ENCODE measurements at regions of chr7 and their contacts with region 1.

Region 1: GRCh38 chr7:116929914-116930913 is 23.1 kb upstream of the ST7 start:
- DNase-seq: peak; percentile 60 to 69
- ATAC-seq: peak; percentile 83 to 88
- H3K4me3 ChIP-seq: no peak overlapping the region
- H3K27ac ChIP-seq: no peak overlapping the region
- H3K4me1 ChIP-seq: no peaks in the 10 kb centered on the region
- H3K27me3 ChIP-seq: no peaks in the 10 kb centered on the region
- CTCF ChIP-seq: peak; percentile 83 to 92 (median 86)
- POLR2A ChIP-seq: no peak

Region 2: GRCh38 chr7:116610210-116610609 is 320.0 kb before region 1 on chr7:
- in situ Hi-C with region 1: no loop called
- intact Hi-C with region 1: no loop called
- DNase-seq: no peak
- ATAC-seq: no peak
- H3K4me3 ChIP-seq: no peak overlapping the region
- H3K27ac ChIP-seq: no peak overlapping the region
- H3K4me1 ChIP-seq: no peaks in the 10 kb centered on the region
- H3K27me3 ChIP-seq: no peaks in the 10 kb centered on the region
- CTCF ChIP-seq: no peak
- POLR2A ChIP-seq: no peak

Region 3: GRCh38 chr7:116953727-116954442 is 23.7 kb after region 1 on chr7:
- in situ Hi-C with region 1: no loop called
- intact Hi-C with region 1: loop called (anchors 1 kb)
- DNase-seq: peak; percentile 43 to 62
- ATAC-seq: peak; percentile 82 to 86
- H3K4me3 ChIP-seq: peak overlapping the region; percentile 74 to 88 (median 83)
- H3K27ac ChIP-seq: peak overlapping the region; percentile 94 to 98 (median 96)
- H3K4me1 ChIP-seq: peaks cover 29 to 33% of the 10 kb centered on the region in 2 donors
- H3K27me3 ChIP-seq: no peaks in the 10 kb centered on the region
- CTCF ChIP-seq: no peak
- POLR2A ChIP-seq: peak; percentile 68 to 79

Region 4: GRCh38 chr7:116984917-116985316 is 54.7 kb after region 1 on chr7:
- in situ Hi-C with region 1: loop called in 1 of 4 experiments (anchors 5 kb)
- intact Hi-C with region 1: loop called (anchors 5 kb)
- DNase-seq: no peak
- ATAC-seq: no peak
- H3K4me3 ChIP-seq: no peak overlapping the region
- H3K27ac ChIP-seq: no peak overlapping the region
- H3K4me1 ChIP-seq: peaks cover 3 to 6% of the 10 kb centered on the region in 2 donors
- H3K27me3 ChIP-seq: no peaks in the 10 kb centered on the region
- CTCF ChIP-seq: peak; percentile 48 to 69 (median 60)
- POLR2A ChIP-seq: no peak

Region 5: GRCh38 chr7:117019786-117020590 is 89.8 kb after region 1 on chr7:
- in situ Hi-C with region 1: no loop called
- intact Hi-C with region 1: no loop called
- DNase-seq: peak; percentile 15 to 53
- ATAC-seq: peak; percentile 86 to 88
- H3K4me3 ChIP-seq: peak overlapping the region; percentile 40 to 47 (median 44)
- H3K27ac ChIP-seq: peak overlapping the region; percentile 63 to 70 (median 66)
- H3K4me1 ChIP-seq: peaks cover 58 to 84% of the 10 kb centered on the region in 2 donors
- H3K27me3 ChIP-seq: no peaks in the 10 kb centered on the region
- CTCF ChIP-seq: no peak
- POLR2A ChIP-seq: no peak

Region 6: GRCh38 chr7:117119192-117119924 is 189.1 kb after region 1 on chr7:
- in situ Hi-C with region 1: loop called in 1 of 4 experiments (anchors 5 kb)
- intact Hi-C with region 1: loop called (anchors 2 kb)
- DNase-seq: peak; percentile 43 to 67
- ATAC-seq: peak in 1 of 2 donors; percentile 65
- H3K4me3 ChIP-seq: no peak overlapping the region
- H3K27ac ChIP-seq: no peak overlapping the region
- H3K4me1 ChIP-seq: peaks cover 8 to 23% of the 10 kb centered on the region in 2 donors
- H3K27me3 ChIP-seq: no peaks in the 10 kb centered on the region
- CTCF ChIP-seq: peak; percentile 75 to 90 (median 81)
- POLR2A ChIP-seq: no peak

Region 7: DNA sequence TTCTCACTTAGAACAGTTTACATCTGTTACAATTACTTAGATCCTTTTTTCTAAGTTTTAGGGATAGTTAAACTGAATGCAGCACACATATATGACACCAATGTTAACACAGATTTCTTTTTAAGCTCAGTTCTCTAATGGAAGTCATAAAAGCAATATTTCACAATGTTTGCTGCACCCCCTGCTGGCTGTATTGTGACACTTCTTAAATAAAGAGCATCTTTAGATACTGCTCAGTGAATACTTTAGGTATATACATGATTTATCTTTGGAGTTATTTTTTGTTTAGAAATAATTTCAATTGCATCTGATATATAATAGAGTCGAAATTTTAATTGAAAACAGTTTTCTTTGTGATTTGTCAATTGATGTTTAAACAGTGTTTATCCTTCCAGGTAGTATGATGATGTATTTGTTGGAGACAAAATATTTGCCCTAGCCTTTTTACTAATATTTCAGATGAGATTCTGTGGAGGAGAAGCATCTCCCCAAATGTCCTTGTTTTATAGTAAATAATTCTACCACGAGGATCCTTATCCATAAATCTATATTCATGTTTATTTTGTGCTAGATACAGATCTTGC is 197.5 kb after region 1 on chr7:
- in situ Hi-C with region 1: loop called (anchors 5 kb)
- intact Hi-C with region 1: loop called (anchors 1 kb)
- DNase-seq: peak in 1 of 2 donors; percentile 28
- ATAC-seq: peak in 1 of 2 donors; percentile 50
- H3K4me3 ChIP-seq: no peak overlapping the region
- H3K27ac ChIP-seq: no peak overlapping the region
- H3K4me1 ChIP-seq: peaks cover 26 to 39% of the 10 kb centered on the region in 2 donors
- H3K27me3 ChIP-seq: no peaks in the 10 kb centered on the region
- CTCF ChIP-seq: peak; percentile 45 to 89 (median 69)
- POLR2A ChIP-seq: no peak